Dendritic cell treated with granulocyte-macrophage colony-stimulating factor and Interleukin-4, amounts not matched to agents 40 ng/mL and 50 ng/mL, for 4 days (primary cell): ENCODE measurements at regions of chr2 and their contacts with region 1.

Region 1: GRCh38 chr2:126971481-126972278 is 73.0 kb downstream of the TEX51 start:
- H3K4me3 Mint-ChIP-seq: peak overlapping the region; percentile 75
- H3K27ac Mint-ChIP-seq: peak overlapping the region; percentile 50
- H3K4me1 Mint-ChIP-seq: peaks cover 8% of the 10 kb centered on the region
- H3K27me3 Mint-ChIP-seq: peaks cover 23% of the 10 kb centered on the region

Region 2: DNA sequence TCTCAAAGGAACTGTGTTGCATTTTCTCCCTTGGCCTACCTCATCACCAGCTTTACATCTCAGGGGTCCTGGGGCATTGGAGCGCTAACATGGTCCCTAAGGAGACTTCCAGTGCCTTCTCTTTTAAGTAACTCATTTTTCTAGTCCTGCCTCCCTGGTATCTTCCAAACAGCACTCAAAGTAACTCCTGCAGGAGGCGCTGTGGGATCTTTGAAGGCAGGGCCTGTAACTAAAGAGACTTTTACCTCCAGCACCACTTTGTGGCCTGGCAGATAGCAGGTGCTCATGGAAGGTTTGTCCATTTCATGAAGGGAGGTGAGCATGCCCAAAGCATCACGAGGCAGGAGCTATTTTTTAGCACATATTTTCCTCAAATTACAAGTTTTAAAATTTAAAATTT is 726.7 kb before region 1 on chr2:
- intact Hi-C with region 1: loop called (anchors 5 kb)
- H3K4me3 Mint-ChIP-seq: no peak overlapping the region
- H3K27ac Mint-ChIP-seq: no peak overlapping the region
- H3K4me1 Mint-ChIP-seq: no peaks in the 10 kb centered on the region
- H3K27me3 Mint-ChIP-seq: peaks cover 1% of the 10 kb centered on the region

Region 3: DNA sequence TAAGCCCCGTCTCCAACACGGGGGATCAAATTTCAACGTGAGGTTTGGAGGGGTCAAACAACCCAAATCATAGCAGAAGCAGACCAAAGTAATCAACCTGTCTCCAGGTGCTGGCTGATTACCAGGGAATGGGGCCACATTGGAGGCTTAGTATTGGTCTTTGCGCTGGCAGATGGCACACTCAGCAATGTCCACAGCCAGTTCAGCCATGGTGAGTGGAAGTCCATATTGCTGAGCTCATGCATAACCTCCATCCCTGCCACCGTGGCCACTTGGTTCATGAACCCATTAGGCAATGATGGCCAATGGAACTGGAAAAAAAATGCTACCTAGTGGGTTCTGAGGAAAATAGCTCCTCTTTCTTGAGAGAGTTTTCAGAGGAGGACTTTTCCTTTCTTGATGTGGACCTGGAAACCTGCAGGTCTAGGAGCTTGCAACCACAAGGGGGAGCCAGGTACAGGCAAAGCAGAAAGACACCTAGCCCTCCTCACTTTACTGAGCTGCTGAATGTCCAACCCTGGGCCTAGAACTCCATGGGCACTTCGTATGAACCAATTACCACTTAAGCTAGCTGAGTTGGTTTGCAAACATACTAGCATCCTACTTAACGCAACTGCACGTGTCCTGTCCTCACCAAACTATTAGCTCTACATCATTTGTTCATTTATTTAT is 443.7 kb before region 1 on chr2:
- intact Hi-C with region 1: loop called (anchors 5 kb)
- H3K4me3 Mint-ChIP-seq: no peak overlapping the region
- H3K27ac Mint-ChIP-seq: no peak overlapping the region
- H3K4me1 Mint-ChIP-seq: no peaks in the 10 kb centered on the region
- H3K27me3 Mint-ChIP-seq: no peaks in the 10 kb centered on the region

Region 4: GRCh38 chr2:127448526-127448925 is 476.8 kb after region 1 on chr2:
- intact Hi-C with region 1: no loop called
- H3K4me3 Mint-ChIP-seq: no peak overlapping the region
- H3K27ac Mint-ChIP-seq: no peak overlapping the region
- H3K4me1 Mint-ChIP-seq: peaks cover 10% of the 10 kb centered on the region
- H3K27me3 Mint-ChIP-seq: no peaks in the 10 kb centered on the region